Activated naive CD4-positive, alpha-beta T cell treated with anti-CD3 and anti-CD28 coated beads for 36 hours (primary cell): ENCODE measurements at regions of chr9 and their contacts with region 1.

Region 1: GRCh38 chr9:128127990-128128835 is 684 bp upstream of the PTGES2 start:
- DNase-seq: peak; percentile 87
- H3K4me3 Mint-ChIP-seq: peak overlapping the region; percentile 95
- H3K27ac Mint-ChIP-seq: peak overlapping the region; percentile 95
- H3K4me1 Mint-ChIP-seq: peaks cover 30% of the 10 kb centered on the region
- H3K27me3 Mint-ChIP-seq: no peaks in the 10 kb centered on the region

Region 2: DNA sequence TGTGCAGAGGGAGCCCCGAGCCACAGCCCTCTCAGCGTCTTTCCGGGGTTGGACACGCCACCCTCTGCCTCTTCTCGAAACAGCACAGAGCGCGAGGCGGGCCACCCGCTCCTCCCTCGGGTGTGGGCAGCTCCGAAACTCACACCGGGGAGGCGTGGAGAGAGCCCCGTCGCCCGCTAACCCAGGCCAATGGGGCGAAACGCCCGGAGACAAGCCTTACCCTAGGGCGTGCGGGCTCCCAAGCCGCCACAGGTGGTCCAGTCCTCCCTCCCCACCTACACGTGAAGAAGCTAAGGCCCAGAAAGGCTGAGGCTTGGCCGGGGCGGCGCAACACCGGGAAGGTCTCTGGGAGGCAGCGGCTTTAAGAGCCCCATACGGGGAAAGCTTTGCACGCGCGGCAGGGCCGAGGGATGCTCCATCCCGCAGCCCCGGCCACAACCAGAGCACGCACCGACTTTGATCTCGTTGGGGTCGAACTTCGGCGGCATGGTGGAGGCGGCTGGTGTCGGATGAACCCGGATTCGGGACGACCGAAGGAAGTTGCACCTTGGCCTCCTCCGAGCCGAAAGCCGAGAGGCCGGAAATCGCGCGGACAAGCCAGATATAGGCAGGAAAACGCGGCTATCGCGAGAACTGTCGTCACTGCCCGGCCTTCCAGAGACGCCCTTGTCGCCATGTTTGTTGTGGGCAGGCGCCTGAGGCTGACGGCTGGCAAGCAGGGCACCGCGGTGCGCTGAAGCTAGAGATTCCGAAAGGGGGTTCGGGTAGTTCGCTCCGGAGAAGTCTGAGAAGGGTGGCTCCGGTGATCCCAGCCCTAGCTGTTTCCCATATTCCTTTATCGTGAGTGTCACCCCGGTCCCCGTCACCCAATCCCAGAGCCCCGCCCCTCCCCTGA is 677.1 kb before region 1 on chr9 and contains the starts of genes LRSAM1 and RPL12:
- CTCF ChIA-PET with region 1: no interaction called
- intact Hi-C with region 1: loop called (anchors 2 kb)
- DNase-seq: peak; percentile 97
- H3K4me3 Mint-ChIP-seq: peak within 1 kb of the TSS; percentile 89
- H3K27ac Mint-ChIP-seq: peak within 1 kb of the TSS; percentile 95
- H3K4me1 Mint-ChIP-seq: peaks cover 42% of the 10 kb centered on the region
- H3K27me3 Mint-ChIP-seq: no peaks in the 10 kb centered on the region
- total RNA-seq, gene LRSAM1: 8.8 to 9.9 TPM
- total RNA-seq, gene RPL12: 3,038 to 3,119 TPM

Region 3: GRCh38 chr9:128067876-128068613 is 60.2 kb before region 1 on chr9 and contains the start of gene SLC25A25:
- CTCF ChIA-PET with region 1: no interaction called
- intact Hi-C with region 1: loop called (anchors 1 kb)
- DNase-seq: peak; percentile 100
- H3K4me3 Mint-ChIP-seq: no peak within 1 kb of the TSS
- H3K27ac Mint-ChIP-seq: peak within 1 kb of the TSS; percentile 86
- H3K4me1 Mint-ChIP-seq: peaks cover 56% of the 10 kb centered on the region
- H3K27me3 Mint-ChIP-seq: no peaks in the 10 kb centered on the region
- total RNA-seq, gene SLC25A25: 12.0 to 12.7 TPM

Region 4: GRCh38 chr9:128117613-128118471 is 10.4 kb before region 1 on chr9:
- CTCF ChIA-PET with region 1: interaction called, 24 read pairs
- intact Hi-C with region 1: loop called (anchors 2 kb)
- DNase-seq: peak; percentile 98
- H3K4me3 Mint-ChIP-seq: no peak overlapping the region
- H3K27ac Mint-ChIP-seq: no peak overlapping the region
- H3K4me1 Mint-ChIP-seq: peaks cover 10% of the 10 kb centered on the region
- H3K27me3 Mint-ChIP-seq: no peaks in the 10 kb centered on the region

Region 5: GRCh38 chr9:128191406-128192046 is 63.3 kb after region 1 on chr9 and contains the start of gene CIZ1:
- CTCF ChIA-PET with region 1: interaction called, 6 read pairs
- intact Hi-C with region 1: loop called (anchors 2 kb)
- DNase-seq: peak; percentile 71
- H3K4me3 Mint-ChIP-seq: peak within 1 kb of the TSS; percentile 96
- H3K27ac Mint-ChIP-seq: peak within 1 kb of the TSS; percentile 83
- H3K4me1 Mint-ChIP-seq: peaks cover 21% of the 10 kb centered on the region
- H3K27me3 Mint-ChIP-seq: no peaks in the 10 kb centered on the region
- total RNA-seq, gene CIZ1: 79.5 to 82.8 TPM

Region 6: GRCh38 chr9:128249908-128250838 is 122.0 kb after region 1 on chr9:
- CTCF ChIA-PET with region 1: no interaction called
- intact Hi-C with region 1: loop called (anchors 1 kb)
- DNase-seq: peak; percentile 98
- H3K4me3 Mint-ChIP-seq: peak overlapping the region; percentile 77
- H3K27ac Mint-ChIP-seq: no peak overlapping the region
- H3K4me1 Mint-ChIP-seq: peaks cover 14% of the 10 kb centered on the region
- H3K27me3 Mint-ChIP-seq: peaks cover 10% of the 10 kb centered on the region

Region 7: DNA sequence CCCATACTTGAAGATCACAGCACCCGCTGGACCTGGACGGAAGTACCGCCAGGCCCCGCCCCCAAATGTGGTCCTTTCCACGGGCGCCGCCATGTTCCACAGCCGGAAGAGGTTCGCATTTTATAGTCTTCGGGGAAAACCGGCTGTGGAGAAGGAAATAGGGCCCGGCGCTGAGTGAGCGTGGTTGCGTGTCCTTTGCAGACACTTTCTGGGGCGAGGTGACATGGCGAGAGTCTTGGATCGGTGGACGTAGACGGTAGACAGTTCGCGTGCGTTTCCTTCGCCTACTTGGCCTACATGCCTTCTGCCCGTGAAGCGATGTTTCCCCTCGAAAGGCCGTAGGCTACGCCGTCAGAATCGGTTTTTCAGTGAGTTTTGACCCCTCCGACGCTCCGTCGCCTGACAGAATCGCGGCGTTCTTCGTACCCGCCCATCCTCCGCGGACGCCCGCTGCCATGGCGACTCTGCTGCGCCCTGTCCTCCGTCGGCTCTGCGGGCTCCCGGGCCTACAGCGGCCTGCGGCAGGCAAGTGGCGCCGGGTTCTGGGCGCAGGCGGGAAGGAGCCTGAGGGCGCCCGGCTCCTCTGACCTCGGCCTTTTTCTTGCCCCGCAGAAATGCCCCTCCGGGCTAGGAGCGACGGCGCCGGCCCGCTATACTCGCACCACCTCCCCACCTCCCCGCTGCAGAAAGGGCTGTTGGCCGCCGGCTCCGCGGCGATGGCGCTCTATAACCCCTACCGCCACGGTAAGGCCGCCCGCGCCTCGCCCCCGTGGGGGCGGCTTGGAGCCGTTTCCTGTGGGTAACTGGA is 194.4 kb after region 1 on chr9 and contains the starts of genes COQ4 and TRUB2:
- CTCF ChIA-PET with region 1: no interaction called
- intact Hi-C with region 1: loop called (anchors 1 kb)
- DNase-seq: peak; percentile 95
- H3K4me3 Mint-ChIP-seq: peak within 1 kb of the TSS; percentile 90
- H3K27ac Mint-ChIP-seq: peak within 1 kb of the TSS; percentile 94
- H3K4me1 Mint-ChIP-seq: peaks cover 22% of the 10 kb centered on the region
- H3K27me3 Mint-ChIP-seq: no peaks in the 10 kb centered on the region
- total RNA-seq, gene COQ4: 27.8 to 29.6 TPM
- total RNA-seq, gene TRUB2: 28.0 to 29.4 TPM